Mucosa of descending colon (tissue), 3 donors: ENCODE measurements at regions of chr4 and their contacts with region 1.

Region 1: GRCh38 chr4:158821228-158821971 is 52.6 kb downstream of the FNIP2 start:
- DNase-seq: no peak
- ATAC-seq: no peak
- H3K4me3 ChIP-seq: no peak overlapping the region
- H3K4me1 ChIP-seq: peaks cover 75% of the 10 kb centered on the region
- CTCF ChIP-seq: no peak

Region 2: DNA sequence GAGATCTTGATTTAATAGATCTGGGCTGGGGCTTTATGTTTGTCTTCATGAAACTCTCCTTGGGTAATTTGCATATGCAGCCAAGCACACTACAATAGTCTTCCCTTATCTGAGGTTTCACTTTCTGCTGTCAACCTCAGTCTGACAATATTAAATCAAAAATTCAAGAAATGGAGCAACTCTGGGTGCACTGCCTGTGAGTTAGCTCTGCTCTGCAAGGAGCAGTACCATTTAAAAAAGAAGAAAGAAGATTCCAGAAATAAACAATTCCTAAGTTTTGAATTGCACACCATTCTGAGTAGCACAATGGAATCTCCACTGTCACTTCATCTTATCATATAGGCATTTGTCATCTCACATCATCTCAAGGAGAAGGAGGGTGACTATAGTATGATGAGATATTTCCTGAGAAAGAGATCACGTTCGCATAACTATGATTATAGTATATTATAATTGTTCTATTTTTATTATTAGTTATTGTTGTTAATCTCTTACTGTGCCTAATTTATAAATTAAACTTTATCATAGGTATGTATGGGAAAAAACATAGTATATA is 43.2 kb before region 1 on chr4:
- intact Hi-C with region 1: loop called in 1 of 2 experiments (anchors 10 kb)
- DNase-seq: no peak
- ATAC-seq: peak; percentile 55
- H3K4me3 ChIP-seq: no peak overlapping the region
- H3K4me1 ChIP-seq: peaks cover 68% of the 10 kb centered on the region
- CTCF ChIP-seq: no peak